BJ (cell line): ENCODE measurements at regions of chr19 and their contacts with region 1.

Region 1: DNA sequence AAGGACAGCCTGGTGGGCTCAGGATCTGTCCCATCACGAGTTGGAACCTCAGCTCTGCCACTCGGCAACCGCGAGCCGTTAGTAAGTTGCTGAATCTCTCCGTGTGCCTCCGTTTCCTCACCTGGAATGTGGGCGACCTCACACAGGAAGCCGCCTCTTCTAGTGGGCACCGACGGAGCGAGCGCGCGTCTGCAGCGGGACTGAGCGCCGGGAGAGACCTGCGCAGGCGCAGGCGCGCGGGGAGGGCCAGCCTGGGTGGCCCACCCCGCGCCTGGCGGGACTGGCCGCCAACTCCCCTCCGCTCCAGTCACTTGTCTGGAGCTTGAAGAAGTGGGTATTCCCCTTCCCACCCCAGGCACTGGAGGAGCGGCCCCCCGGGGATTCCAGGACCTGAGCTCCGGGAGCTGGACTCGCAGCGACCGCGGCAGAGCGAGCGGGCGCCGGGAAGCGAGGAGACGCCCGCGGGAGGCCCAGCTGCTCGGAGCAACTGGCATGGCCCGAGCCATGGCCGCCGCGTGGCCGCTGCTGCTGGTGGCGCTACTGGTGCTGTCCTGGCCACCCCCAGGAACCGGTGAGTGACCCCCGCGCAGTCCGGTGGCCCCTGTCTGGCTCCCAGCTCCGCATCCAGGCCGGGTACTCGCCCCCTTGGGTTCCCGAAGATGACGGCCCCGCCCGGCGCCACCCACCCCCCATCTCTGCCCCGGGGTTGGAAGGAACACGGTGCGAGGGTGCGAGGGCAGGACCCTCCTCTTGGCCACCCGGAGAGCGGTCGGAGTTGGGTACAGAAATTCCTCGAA is at the start of gene PVR:
- DNase-seq: no peak
- H3K4me3 ChIP-seq: peak within 1 kb of the TSS; percentile 93
- H3K27me3 ChIP-seq: no peaks in the 10 kb centered on the region
- CTCF ChIP-seq: peak; percentile 19; the same call in 1 of the 2 replicates
- polyA plus RNA-seq, gene PVR: 84.4 and 129 TPM in 2 replicates

Region 2: DNA sequence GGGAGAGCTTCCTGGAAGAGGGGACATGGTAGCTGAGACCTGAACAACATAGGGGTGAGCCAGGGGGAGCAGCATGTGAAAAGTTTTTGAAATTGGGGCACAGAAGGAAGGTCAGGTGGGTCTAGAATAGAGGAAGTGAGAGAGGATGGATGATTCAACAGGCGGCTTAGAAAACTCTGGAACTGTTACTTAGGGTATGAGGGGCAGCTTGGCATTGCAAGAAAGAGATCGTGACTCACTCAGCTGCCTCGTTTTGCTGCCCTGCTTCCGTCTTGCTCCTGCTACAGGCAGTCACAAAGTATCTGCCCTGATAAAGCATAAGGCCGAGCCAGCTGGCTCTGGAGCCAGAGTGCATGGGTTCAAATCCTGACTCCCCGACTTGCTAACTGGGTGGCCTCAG is 113.0 kb before region 1 on chr19:
- CTCF ChIA-PET with region 1: no interaction called
- POLR2A ChIA-PET with region 1: no interaction called
- DNase-seq: no peak
- H3K4me3 ChIP-seq: no peak overlapping the region
- H3K27me3 ChIP-seq: peaks cover 6% of the 10 kb centered on the region
- CTCF ChIP-seq: no peak

Region 3: DNA sequence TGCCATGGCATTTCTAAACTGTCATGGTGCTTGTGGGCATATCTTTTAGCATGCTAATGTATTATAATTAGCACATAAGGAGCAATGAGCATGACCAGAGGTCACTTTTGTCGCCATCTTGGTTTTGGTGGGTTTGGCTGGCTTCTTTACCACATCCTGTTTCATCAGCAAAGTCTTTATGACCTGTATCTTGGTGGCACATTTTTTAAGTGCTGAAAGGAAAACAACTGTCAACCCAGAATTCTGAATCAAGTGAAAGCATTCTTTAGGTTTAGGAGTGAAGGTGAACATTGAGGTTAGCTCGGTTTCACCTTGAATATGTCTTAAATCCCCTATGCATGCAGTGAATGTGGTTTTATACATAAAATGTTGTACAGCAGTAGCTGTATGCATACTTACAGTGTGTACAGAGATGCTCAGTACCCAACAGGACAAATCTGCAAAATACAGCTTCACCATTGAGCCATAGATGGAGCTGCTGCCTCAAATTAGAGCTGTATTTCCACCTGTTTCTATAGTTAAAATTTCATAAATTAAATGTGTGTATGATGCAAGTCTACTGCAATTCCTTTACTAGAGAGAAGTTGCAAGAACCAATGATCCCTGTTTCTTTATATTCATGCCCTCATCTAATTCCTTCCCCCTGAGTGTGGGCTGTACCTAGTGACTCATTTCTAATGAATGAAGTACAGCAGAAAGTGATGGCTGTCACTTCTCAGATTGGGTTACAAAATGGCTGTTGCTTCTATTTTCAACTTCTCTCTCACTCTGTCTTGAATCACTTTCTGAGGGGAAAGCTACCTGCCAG is 55.6 kb before region 1 on chr19:
- CTCF ChIA-PET with region 1: interaction called, 10 read pairs
- POLR2A ChIA-PET with region 1: no interaction called
- DNase-seq: peak; percentile 75
- H3K4me3 ChIP-seq: no peak overlapping the region
- H3K27me3 ChIP-seq: no peaks in the 10 kb centered on the region
- CTCF ChIP-seq: peak; percentile 41

Region 4: DNA sequence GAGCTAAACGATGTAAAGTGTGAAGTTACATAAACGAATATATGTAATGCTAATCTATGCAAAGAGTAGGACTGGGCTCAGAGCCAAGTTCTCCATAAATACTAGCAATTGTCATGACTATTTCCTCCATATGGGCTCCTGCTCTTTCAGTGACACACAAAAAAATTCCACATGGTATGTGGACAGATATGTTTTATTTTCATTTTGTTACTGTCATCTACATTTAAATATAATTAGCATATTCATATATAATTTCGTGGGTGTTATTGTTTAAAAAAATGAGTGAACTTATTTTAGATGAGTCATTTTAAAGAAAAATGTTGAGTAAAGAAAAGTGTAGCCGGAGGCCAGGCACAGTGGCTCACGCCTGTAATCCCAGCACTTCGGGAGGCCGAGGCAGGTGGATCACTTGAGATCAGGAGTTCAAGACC is 35.4 kb before region 1 on chr19:
- CTCF ChIA-PET with region 1: interaction called, 11 read pairs
- POLR2A ChIA-PET with region 1: interaction called, 5 read pairs
- DNase-seq: no peak
- H3K4me3 ChIP-seq: no peak overlapping the region
- H3K27me3 ChIP-seq: no peaks in the 10 kb centered on the region
- CTCF ChIP-seq: no peak

Region 5: GRCh38 chr19:44626048-44626624 is 17.7 kb before region 1 on chr19:
- CTCF ChIA-PET with region 1: no interaction called
- POLR2A ChIA-PET with region 1: interaction called, 23 read pairs
- DNase-seq: peak; percentile 95
- H3K4me3 ChIP-seq: no peak overlapping the region
- H3K27me3 ChIP-seq: no peaks in the 10 kb centered on the region
- CTCF ChIP-seq: no peak

Region 6: DNA sequence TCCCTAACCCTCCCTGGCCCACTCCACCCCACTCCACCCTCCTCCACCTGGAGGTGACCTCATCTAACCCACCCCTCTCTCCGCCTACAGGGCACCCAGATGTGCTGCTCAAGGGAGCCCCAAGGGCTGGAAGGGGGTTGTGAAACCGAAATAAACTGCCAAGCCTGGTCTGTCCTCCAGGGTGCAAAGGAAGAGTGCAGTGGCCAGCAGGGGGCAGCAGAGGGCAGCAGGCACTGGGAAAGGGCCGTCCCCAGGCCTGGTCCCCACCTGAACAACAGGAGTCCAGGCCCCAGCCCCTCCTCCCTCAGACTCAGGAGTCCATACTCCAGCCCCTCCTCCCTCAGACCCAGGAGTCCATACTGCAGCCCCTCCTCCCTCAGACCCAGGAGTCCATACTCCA is 156.7 kb after region 1 on chr19:
- CTCF ChIA-PET with region 1: no interaction called
- POLR2A ChIA-PET with region 1: no interaction called
- DNase-seq: no peak
- H3K4me3 ChIP-seq: no peak overlapping the region
- H3K27me3 ChIP-seq: peaks cover 3% of the 10 kb centered on the region; the same call in 1 of the 2 replicates
- CTCF ChIP-seq: peak; percentile 98